Tibial artery (tissue), 4 donors: ENCODE measurements at regions of chr5 and their contacts with region 1.

Region 1: DNA sequence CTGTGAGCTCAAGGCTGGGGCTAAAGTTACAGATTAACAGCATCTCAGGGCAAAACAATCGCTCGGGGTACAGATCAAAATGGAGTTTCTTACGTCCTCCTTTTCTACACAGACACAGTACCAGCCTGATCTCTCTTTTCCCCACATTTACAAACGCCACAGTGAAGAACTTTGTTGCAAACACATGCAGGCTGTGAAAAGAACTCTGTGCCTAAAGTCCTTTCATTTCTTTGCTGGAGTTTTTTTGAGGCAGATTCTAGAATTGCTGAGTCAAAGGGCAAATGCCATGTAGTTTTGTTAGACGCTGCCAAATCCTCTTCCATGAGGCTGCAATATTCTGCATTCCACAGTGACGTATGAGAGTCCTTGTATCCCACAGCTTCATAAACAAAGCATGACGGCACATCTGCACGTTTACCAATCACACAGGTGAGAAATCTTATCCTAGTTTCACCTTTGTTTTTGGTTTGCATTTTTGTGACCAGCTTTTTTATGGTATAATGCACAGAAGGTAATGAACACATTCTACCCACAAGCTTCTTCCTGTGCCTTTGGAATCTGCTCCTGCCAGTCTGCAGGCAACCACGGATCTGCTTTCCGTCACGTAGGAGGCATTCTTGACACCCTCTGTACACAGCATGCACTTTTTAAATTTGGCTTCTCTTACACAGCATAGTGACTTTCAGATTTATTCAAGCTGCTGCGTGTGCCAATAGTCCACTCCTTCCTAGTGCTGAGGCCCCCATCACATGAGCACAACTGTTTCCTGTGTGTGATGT is 44.6 kb upstream of the LPCAT1 start:
- DNase-seq: peak in 1 of 2 donors; percentile 45
- H3K4me3 ChIP-seq: peak overlapping the region in 1 of 2 donors; percentile 13
- H3K27ac ChIP-seq: peak overlapping the region; percentile 69 to 82
- H3K4me1 ChIP-seq: peaks cover 0 to 46% (median 27%) of the 10 kb centered on the region in 4 donors
- H3K27me3 ChIP-seq: no peaks in the 10 kb centered on the region
- CTCF ChIP-seq: no peak

Region 2: GRCh38 chr5:264346-264745 is 1304.0 kb before region 1 on chr5:
- intact Hi-C with region 1: loop called (anchors 5 kb)
- DNase-seq: no peak
- H3K4me3 ChIP-seq: no peak overlapping the region
- H3K27ac ChIP-seq: peak overlapping the region in 1 of 2 donors; percentile 62
- H3K4me1 ChIP-seq: peaks cover 0 to 24% (median 4%) of the 10 kb centered on the region in 4 donors
- H3K27me3 ChIP-seq: no peaks in the 10 kb centered on the region
- CTCF ChIP-seq: no peak

Region 3: GRCh38 chr5:285639-286557 is 1282.5 kb before region 1 on chr5:
- intact Hi-C with region 1: no loop called
- DNase-seq: no peak
- H3K4me3 ChIP-seq: no peak overlapping the region
- H3K27ac ChIP-seq: no peak overlapping the region
- H3K4me1 ChIP-seq: peaks cover 0 to 8% (median 0%) of the 10 kb centered on the region in 4 donors
- H3K27me3 ChIP-seq: no peaks in the 10 kb centered on the region
- CTCF ChIP-seq: no peak

Region 4: DNA sequence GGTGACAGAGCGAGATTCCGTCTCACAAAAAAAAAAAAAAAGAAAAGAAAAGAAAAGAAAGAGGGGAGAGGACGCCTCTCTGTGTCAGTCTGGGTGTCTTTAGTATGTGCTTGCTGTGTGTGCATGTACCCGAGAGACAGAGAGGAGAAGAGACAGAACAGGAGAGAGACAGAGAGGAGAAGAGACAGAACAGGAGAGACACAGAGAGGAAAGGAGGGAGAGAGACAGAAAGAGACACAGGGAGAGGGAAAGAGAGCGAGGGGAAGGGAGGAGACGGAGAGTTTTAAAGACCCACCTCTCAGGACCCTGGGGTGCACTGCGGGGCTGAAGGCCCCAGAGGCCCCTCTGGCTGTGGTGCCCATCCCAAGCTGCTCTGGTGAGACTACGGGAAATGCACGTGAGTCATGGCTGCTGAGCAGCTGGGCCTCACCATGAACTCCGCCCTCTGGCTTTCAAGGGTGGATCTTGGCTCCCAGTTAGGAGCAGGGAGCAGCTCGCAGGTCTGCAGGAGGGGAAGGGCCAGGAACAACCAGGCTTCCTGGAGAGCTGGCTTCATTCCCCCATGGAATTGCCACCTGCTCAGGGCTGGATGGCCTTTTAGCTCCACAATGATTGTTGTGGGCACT is 131.1 kb before region 1 on chr5:
- intact Hi-C with region 1: no loop called
- DNase-seq: peak in 1 of 2 donors; percentile 32
- H3K4me3 ChIP-seq: no peak overlapping the region
- H3K27ac ChIP-seq: no peak overlapping the region
- H3K4me1 ChIP-seq: no peaks in the 10 kb centered on the region
- H3K27me3 ChIP-seq: peaks cover 0 to 26% of the 10 kb centered on the region in 2 donors
- CTCF ChIP-seq: no peak